A549 (cell line): ENCODE measurements at regions of chr19 and their contacts with region 1.

Region 1: GRCh38 chr19:39052243-39052746 is 19.9 kb upstream of the FBXO27 start:
- DNase-seq: peak; percentile 75 to 87
- ATAC-seq: peak; percentile 85 to 96
- H3K4me3 ChIP-seq: no peak overlapping the region
- H3K27ac ChIP-seq: peak overlapping the region; percentile 54 to 71
- H3K4me1 ChIP-seq: peaks cover 22% of the 10 kb centered on the region
- CTCF ChIP-seq: peak; percentile 99
- EP300 ChIP-seq: no peak
- POLR2A ChIP-seq: no peak
- RAD21 ChIP-seq: peak; percentile 98 to 99

Region 2: GRCh38 chr19:38975214-38975860 is 77.0 kb before region 1 on chr19 and contains the start of gene FBXO17:
- CTCF ChIA-PET with region 1: interaction called, 43 read pairs
- POLR2A ChIA-PET with region 1: no interaction called
- DNase-seq: peak; percentile 84 to 87
- ATAC-seq: peak; percentile 83
- H3K4me3 ChIP-seq: peak within 1 kb of the TSS; percentile 51
- H3K27ac ChIP-seq: peak within 1 kb of the TSS; percentile 91 to 94
- H3K4me1 ChIP-seq: peaks cover 51% of the 10 kb centered on the region
- CTCF ChIP-seq: no peak; the same call in 2 of the 3 replicates
- EP300 ChIP-seq: 0 out of 5 replicates have a peak, but pooled peaks of 1 of the 2 experiments have one; percentile 6
- POLR2A ChIP-seq: peak; percentile 41
- RAD21 ChIP-seq: 0 out of 5 replicates have a peak, but pooled peaks have one; percentile 11 to 16
- polyA plus RNA-seq, gene FBXO17: 68.1 and 73.1 TPM in 2 replicates

Region 3: GRCh38 chr19:39008137-39008536 is 44.2 kb before region 1 on chr19:
- CTCF ChIA-PET with region 1: interaction called, 11 read pairs
- POLR2A ChIA-PET with region 1: no interaction called
- DNase-seq: no peak
- ATAC-seq: no peak
- H3K4me3 ChIP-seq: no peak overlapping the region
- H3K27ac ChIP-seq: no peak overlapping the region
- H3K4me1 ChIP-seq: no peaks in the 10 kb centered on the region
- CTCF ChIP-seq: no peak
- EP300 ChIP-seq: no peak
- POLR2A ChIP-seq: no peak
- RAD21 ChIP-seq: no peak

Region 4: GRCh38 chr19:39078436-39079200 is 26.3 kb after region 1 on chr19:
- CTCF ChIA-PET with region 1: interaction called, 612 read pairs
- POLR2A ChIA-PET with region 1: no interaction called
- DNase-seq: peak; percentile 94 to 96
- ATAC-seq: peak; percentile 83 to 86
- H3K4me3 ChIP-seq: no peak overlapping the region
- H3K27ac ChIP-seq: peak overlapping the region; percentile 84 to 86
- H3K4me1 ChIP-seq: peaks cover 56% of the 10 kb centered on the region
- CTCF ChIP-seq: no peak
- EP300 ChIP-seq: peak; percentile 95 to 97; a peak in 4 of 5 replicates
- POLR2A ChIP-seq: no peak
- RAD21 ChIP-seq: no peak; a peak in 1 of 5 replicates

Region 5: GRCh38 chr19:39131235-39131755 is 79.0 kb after region 1 on chr19:
- CTCF ChIA-PET with region 1: interaction called, 11 read pairs
- POLR2A ChIA-PET with region 1: no interaction called
- DNase-seq: no peak
- ATAC-seq: no peak
- H3K4me3 ChIP-seq: no peak overlapping the region
- H3K27ac ChIP-seq: 0 out of 6 replicates have a peak overlapping the region, but pooled peaks of 1 of the 2 experiments have one; percentile 3
- H3K4me1 ChIP-seq: peaks cover 46% of the 10 kb centered on the region
- CTCF ChIP-seq: no peak
- EP300 ChIP-seq: no peak
- POLR2A ChIP-seq: no peak
- RAD21 ChIP-seq: no peak

Region 6: GRCh38 chr19:39156326-39157230 is 104.3 kb after region 1 on chr19:
- CTCF ChIA-PET with region 1: interaction called, 19 read pairs
- POLR2A ChIA-PET with region 1: no interaction called
- DNase-seq: no peak
- ATAC-seq: no peak; a peak in 1 of 6 replicates
- H3K4me3 ChIP-seq: no peak overlapping the region
- H3K27ac ChIP-seq: peak overlapping the region in 1 of 2 experiments; percentile 64; a peak in 3 of 6 replicates
- H3K4me1 ChIP-seq: peaks cover 42% of the 10 kb centered on the region
- CTCF ChIP-seq: no peak
- EP300 ChIP-seq: no peak
- POLR2A ChIP-seq: no peak
- RAD21 ChIP-seq: no peak

Region 7: DNA sequence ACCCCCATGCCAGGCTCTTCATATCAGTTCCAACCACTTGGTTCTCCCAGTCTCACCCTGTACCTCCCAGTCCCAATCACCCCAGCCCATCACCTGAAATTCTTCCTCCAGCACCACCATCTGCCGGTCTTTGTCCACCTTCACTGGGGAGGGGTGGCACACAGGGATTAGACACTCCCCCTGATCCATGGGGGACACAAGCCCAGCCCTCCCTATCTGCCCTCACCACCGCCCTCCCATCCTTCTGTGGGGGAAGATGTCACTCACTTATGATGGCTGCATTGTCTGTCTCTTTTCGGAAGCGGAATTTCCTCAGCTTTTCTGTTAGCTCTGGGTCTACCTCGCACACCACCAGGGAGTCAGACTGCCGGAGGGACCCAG is 282.9 kb after region 1 on chr19:
- CTCF ChIA-PET with region 1: interaction called, 14 read pairs
- POLR2A ChIA-PET with region 1: no interaction called
- DNase-seq: no peak
- ATAC-seq: peak; percentile 8 to 33
- H3K4me3 ChIP-seq: no peak overlapping the region
- H3K27ac ChIP-seq: no peak overlapping the region
- H3K4me1 ChIP-seq: peaks cover 9% of the 10 kb centered on the region; the same call in 1 of the 3 replicates
- CTCF ChIP-seq: no peak
- EP300 ChIP-seq: no peak
- POLR2A ChIP-seq: no peak
- RAD21 ChIP-seq: no peak